Upper lobe of right lung (tissue), 1 donor: ENCODE measurements at regions of chr4 and their contacts with region 1.

Region 1: GRCh38 chr4:140851032-140851636 is 94.9 kb upstream of the TBC1D9 start:
- DNase-seq: no peak
- ATAC-seq: peak; percentile 93
- H3K4me3 ChIP-seq: no peak overlapping the region
- H3K27ac ChIP-seq: no peak overlapping the region
- H3K4me1 ChIP-seq: no peaks in the 10 kb centered on the region
- H3K27me3 ChIP-seq: no peaks in the 10 kb centered on the region
- CTCF ChIP-seq: peak; percentile 79

Region 2: DNA sequence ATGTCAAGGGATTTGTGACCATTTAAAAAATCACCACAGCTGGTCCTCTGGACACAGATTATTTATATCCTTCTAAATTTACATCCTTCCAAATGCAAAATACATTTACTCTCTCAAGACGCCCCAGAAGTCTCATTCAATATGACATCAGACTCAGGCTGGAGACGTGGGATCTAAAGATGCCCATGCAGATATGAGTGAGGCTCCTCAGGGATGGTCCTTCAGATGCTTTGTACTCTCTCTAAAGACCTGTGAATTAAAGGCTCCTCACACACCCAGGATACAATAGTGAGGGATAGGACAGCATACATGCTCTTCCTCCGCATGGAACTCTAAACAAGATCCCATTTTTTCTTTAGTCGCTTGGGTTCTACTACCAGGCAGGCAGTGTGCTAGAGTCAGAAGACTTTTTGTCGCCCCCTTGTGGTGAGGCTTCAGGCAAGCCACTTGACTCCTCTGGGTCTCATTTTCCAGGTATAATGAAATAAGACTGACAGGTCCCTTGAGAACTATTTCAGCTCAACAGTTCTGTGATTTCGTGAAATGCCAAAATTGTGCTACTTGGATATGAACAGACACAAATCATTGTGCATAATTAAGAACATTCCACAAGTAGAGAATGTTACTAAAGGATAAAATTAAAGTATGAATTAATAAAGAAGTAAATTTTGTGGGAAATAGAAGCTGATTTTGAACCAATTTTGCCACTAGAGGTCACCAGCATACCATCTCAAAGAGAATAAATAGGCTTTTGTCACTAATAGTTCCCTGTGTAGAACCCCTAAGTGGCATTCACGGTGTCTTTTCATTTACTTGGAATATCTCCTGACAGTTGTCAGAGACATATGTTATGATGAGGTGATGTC is 491.3 kb before region 1 on chr4:
- intact Hi-C with region 1: loop called (anchors 10 kb)
- DNase-seq: peak; percentile 72
- ATAC-seq: peak; percentile 93
- H3K4me3 ChIP-seq: no peak overlapping the region
- H3K27ac ChIP-seq: no peak overlapping the region
- H3K4me1 ChIP-seq: no peaks in the 10 kb centered on the region
- H3K27me3 ChIP-seq: no peaks in the 10 kb centered on the region
- CTCF ChIP-seq: peak; percentile 92

Region 3: GRCh38 chr4:140971077-140971792 is 120.1 kb after region 1 on chr4:
- intact Hi-C with region 1: no loop called
- DNase-seq: no peak
- ATAC-seq: peak; percentile 49
- H3K4me3 ChIP-seq: no peak overlapping the region
- H3K27ac ChIP-seq: no peak overlapping the region
- H3K4me1 ChIP-seq: no peaks in the 10 kb centered on the region
- H3K27me3 ChIP-seq: no peaks in the 10 kb centered on the region
- CTCF ChIP-seq: no peak